ENCODE measurements at regions of chr6 and their contacts with region 1.

Region 1: GRCh38 chr6:37169496-37170272 is at the start of gene PIM1:
- DNase-seq: peak; percentile 98 to 100 (median 100)
- ATAC-seq: peak; percentile 77
- H3K4me3 ChIP-seq: peak within 1 kb of the TSS; percentile 93
- H3K4me3 Mint-ChIP-seq: peak within 1 kb of the TSS; percentile 95
- H3K27ac ChIP-seq: peak within 1 kb of the TSS; percentile 57 to 77
- H3K27ac Mint-ChIP-seq: peak within 1 kb of the TSS; percentile 95
- H3K4me1 ChIP-seq: peaks cover 36% of the 10 kb centered on the region
- H3K4me1 Mint-ChIP-seq: peaks cover 44% of the 10 kb centered on the region
- H3K27me3 ChIP-seq: no peaks in the 10 kb centered on the region
- H3K27me3 Mint-ChIP-seq: no peaks in the 10 kb centered on the region
- CTCF ChIP-seq: no peak
- total RNA-seq, gene PIM1: 175 to 183 TPM

Region 2: DNA sequence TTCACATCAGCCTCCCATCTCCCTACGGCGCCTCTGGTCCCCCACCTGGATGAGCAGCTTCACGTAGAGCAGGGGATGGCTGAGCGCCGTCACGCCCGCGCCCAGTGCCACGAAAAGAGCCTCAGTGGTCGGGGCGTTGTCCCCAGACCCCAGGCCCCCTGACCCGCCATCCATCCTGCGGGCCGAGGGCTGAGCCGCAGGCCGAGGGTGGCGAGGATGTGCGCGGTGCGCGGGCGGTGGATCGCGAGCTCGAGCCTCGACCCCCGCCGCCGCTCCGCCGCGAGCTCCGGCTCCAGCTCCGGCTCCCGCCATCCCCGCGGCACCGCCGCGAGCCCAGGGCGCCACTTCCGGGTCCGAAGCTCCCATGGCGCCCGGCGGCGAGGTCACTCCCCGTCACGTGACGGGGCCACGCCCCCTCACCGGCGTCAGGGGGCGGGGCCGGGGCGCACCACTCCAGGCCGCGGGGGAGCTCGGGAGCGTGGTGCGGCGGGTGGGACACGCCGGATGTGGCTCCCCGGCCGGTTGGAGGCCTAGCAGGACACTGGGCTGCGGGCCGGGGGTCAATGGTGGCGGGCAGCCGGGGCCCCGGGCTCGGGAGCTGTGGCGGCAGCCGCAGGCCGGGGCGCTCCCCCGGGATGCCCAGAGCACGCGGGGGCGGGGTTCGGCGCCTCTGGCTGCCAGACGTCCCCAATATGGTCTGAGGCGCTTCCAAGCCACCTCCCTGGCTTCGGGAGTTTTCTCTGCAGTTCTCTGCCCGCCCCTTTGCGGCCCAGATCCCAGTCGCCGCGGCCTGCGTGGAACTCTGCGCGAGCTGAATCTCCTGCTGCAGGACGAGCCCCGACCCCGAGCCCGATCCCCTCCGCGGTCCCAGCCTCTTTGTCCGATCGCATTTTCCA is 183.6 kb before region 1 on chr6 and contains the start of gene MTCH1:
- CTCF ChIA-PET with region 1: no interaction called
- POLR2A ChIA-PET with region 1: interaction called, 17 read pairs
- intact Hi-C with region 1: loop called in 1 of 2 experiments (anchors 1 kb)
- DNase-seq: peak; percentile 73 to 96 (median 86)
- ATAC-seq: peak; percentile 85
- H3K4me3 ChIP-seq: peak within 1 kb of the TSS; percentile 90
- H3K4me3 Mint-ChIP-seq: peak within 1 kb of the TSS; percentile 99
- H3K27ac ChIP-seq: peak within 1 kb of the TSS; percentile 61 to 81
- H3K27ac Mint-ChIP-seq: no peak within 1 kb of the TSS
- H3K4me1 ChIP-seq: peaks cover 49% of the 10 kb centered on the region
- H3K4me1 Mint-ChIP-seq: peaks cover 23% of the 10 kb centered on the region
- H3K27me3 ChIP-seq: no peaks in the 10 kb centered on the region
- H3K27me3 Mint-ChIP-seq: no peaks in the 10 kb centered on the region
- CTCF ChIP-seq: no peak
- total RNA-seq, gene MTCH1: 231 to 239 TPM

Region 3: GRCh38 chr6:37005061-37005810 is 164.4 kb before region 1 on chr6 and contains the start of gene FGD2:
- CTCF ChIA-PET with region 1: no interaction called
- POLR2A ChIA-PET with region 1: no interaction called
- intact Hi-C with region 1: no loop called
- DNase-seq: peak in 2 of 14 experiments; percentile 7 to 45
- ATAC-seq: no peak
- H3K4me3 ChIP-seq: peak within 1 kb of the TSS; percentile 49
- H3K4me3 Mint-ChIP-seq: peak within 1 kb of the TSS; percentile 62
- H3K27ac ChIP-seq: no peak within 1 kb of the TSS
- H3K27ac Mint-ChIP-seq: peak within 1 kb of the TSS; percentile 2
- H3K4me1 ChIP-seq: peaks cover 25% of the 10 kb centered on the region
- H3K4me1 Mint-ChIP-seq: peaks cover 11% of the 10 kb centered on the region
- H3K27me3 ChIP-seq: no peaks in the 10 kb centered on the region
- H3K27me3 Mint-ChIP-seq: no peaks in the 10 kb centered on the region
- CTCF ChIP-seq: no peak
- total RNA-seq, gene FGD2: 1.2 TPM

Region 4: DNA sequence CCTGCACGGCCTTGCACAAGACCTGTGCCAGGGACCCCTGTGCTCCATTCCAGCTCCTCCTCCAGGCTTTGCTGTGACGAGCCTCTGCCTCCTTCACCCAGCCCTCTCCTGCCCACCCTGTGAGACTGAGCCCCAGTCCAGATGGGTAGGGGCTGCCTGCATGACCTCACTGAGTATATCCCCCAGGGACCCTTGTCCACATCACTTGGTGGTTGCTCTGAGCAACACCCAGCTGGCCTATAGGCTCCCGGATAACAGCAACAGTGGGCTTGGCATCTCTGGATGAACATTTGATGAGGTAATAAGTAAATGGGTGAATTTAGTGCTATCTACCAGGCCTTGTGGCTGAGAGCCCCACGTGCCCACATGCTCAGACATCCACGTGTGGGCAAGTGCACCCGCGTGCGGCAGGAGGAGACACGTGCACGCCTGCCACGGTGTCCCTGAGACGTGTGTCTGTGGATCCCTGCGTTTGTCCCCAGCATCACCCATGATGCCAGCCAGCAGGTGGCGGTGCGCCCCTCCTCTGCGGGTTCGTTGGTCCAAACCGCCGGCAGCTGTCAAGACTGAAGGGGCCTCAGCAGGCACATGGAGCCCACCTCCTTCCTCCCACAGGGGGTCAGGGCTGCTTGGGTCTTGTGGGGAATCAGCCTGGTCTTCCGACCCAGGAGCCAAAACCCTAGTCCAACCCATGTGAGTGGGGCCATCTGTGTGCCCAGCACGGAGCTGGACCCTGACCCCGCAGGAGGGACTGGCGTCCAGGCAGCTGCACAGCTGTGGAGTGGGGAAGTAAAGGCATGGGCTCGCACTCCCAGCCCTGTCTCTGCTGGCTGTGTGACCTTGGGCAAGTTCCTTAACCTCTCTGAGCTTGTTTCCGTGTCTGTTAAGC is 118.3 kb before region 1 on chr6:
- CTCF ChIA-PET with region 1: interaction called, 116 read pairs
- POLR2A ChIA-PET with region 1: interaction called, 147 read pairs
- intact Hi-C with region 1: loop called (anchors 1 kb)
- DNase-seq: peak; percentile 84 to 95 (median 90)
- ATAC-seq: peak; percentile 76
- H3K4me3 ChIP-seq: no peak overlapping the region
- H3K4me3 Mint-ChIP-seq: peak overlapping the region; percentile 76
- H3K27ac ChIP-seq: peak overlapping the region in 1 of 2 donors; percentile 78
- H3K27ac Mint-ChIP-seq: peak overlapping the region; percentile 92
- H3K4me1 ChIP-seq: peaks cover 59% of the 10 kb centered on the region
- H3K4me1 Mint-ChIP-seq: peaks cover 56% of the 10 kb centered on the region
- H3K27me3 ChIP-seq: no peaks in the 10 kb centered on the region
- H3K27me3 Mint-ChIP-seq: no peaks in the 10 kb centered on the region
- CTCF ChIP-seq: peak; percentile 90

Region 5: DNA sequence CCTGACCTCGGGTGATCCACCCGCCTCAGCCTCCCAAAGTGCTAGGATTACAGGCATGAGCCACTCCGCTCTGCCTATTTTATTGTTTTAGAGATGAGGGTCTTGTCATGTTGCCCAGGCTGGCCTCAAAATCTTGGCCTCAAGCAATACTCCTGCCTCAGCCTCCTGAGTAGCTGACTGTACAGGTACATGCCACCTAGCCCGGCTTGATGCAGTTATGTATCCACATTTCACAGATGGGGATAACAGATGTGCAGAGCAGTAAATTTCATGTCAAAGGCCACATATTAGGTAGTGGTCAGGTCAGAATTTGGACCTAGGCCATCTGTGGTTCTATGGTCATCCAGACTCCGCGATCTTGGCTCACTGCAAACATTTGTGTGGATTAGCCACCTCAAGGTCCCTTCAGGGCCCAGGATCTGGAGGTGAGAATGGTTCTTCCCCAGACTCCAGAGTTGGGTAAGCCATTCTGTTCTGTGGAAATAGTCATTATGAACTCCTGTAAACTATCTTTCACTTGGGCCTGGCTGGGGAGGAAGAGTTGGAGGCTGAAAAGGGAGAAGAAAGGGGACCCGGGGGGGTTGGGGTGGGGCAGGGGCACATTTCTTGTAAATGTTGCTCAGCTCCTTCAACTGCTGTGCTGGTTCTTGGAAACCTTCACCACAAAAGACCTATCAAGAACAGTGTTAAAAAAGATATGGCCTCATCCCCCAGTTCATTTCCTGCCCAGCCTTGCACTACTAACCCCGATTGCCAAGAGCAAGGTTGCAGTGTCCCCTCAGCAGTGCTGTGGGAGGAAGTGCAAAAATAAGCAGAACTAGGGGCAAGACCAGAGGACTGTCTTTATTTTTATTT is 13.3 kb after region 1 on chr6:
- CTCF ChIA-PET with region 1: interaction called, 9 read pairs
- POLR2A ChIA-PET with region 1: interaction called, 25 read pairs
- intact Hi-C with region 1: no loop called
- DNase-seq: peak; percentile 28 to 93 (median 54)
- ATAC-seq: peak; percentile 96
- H3K4me3 ChIP-seq: peak overlapping the region; percentile 20
- H3K4me3 Mint-ChIP-seq: peak overlapping the region; percentile 74
- H3K27ac ChIP-seq: peak overlapping the region; percentile 51 to 55
- H3K27ac Mint-ChIP-seq: peak overlapping the region; percentile 95
- H3K4me1 ChIP-seq: peaks cover 72% of the 10 kb centered on the region
- H3K4me1 Mint-ChIP-seq: peaks cover 61% of the 10 kb centered on the region
- H3K27me3 ChIP-seq: no peaks in the 10 kb centered on the region
- H3K27me3 Mint-ChIP-seq: no peaks in the 10 kb centered on the region
- CTCF ChIP-seq: no peak

Region 6: GRCh38 chr6:37207903-37208456 is 38.3 kb after region 1 on chr6:
- CTCF ChIA-PET with region 1: interaction called, 117 read pairs
- POLR2A ChIA-PET with region 1: interaction called, 57 read pairs
- intact Hi-C with region 1: loop called (anchors 1 kb)
- DNase-seq: peak; percentile 83 to 93 (median 89)
- ATAC-seq: peak; percentile 73
- H3K4me3 ChIP-seq: no peak overlapping the region
- H3K4me3 Mint-ChIP-seq: peak overlapping the region; percentile 26
- H3K27ac ChIP-seq: no peak overlapping the region
- H3K27ac Mint-ChIP-seq: peak overlapping the region; percentile 58
- H3K4me1 ChIP-seq: peaks cover 56% of the 10 kb centered on the region
- H3K4me1 Mint-ChIP-seq: peaks cover 50% of the 10 kb centered on the region
- H3K27me3 ChIP-seq: no peaks in the 10 kb centered on the region
- H3K27me3 Mint-ChIP-seq: no peaks in the 10 kb centered on the region
- CTCF ChIP-seq: peak; percentile 86

Measured in CD4-positive, alpha-beta T cell (primary cell).